ENCODE measurements at regions of chr14 and their contacts with region 1.

Region 1: DNA sequence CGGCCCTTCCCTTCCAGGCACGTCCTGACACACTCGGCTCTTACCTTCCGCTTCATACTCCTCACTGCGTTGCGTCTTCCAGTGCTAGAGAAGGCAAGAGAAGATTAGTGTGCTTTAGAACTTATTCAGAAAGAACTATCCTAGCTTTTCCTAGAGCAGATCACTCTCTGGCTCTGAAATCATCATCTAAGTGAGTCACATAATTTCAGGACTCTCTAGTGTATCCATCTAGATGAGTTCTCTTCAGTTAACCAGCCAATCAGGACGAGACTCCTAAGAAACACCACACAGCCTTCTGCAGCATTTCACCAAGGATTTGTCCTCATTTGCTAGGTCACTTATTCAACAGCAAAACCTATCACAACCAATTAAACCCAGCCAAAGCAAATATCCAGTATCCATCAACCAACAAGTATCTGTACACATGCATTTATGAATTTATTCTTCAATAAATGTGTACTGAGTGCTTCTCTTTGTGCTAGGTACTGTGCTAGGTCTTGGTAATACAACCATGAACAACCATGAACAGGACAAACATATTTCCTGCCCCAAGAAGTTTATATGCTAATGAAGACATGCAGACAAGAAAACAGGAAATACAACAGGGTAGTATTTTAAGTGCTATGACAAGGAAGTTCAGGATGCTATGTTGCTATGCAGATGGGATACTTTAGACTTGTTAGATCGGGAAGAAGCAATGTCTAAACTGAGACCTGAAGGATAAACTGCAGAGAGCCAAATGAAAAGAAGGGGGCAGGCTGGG is 52.1 kb downstream of the NIN start:
- DNase-seq: no peak
- ATAC-seq: no peak
- H3K4me3 ChIP-seq: no peak overlapping the region
- H3K4me3 Mint-ChIP-seq: peak overlapping the region in 4 of 10 donors; percentile 39 to 63 (median 50)
- H3K27ac ChIP-seq: no peak overlapping the region
- H3K27ac Mint-ChIP-seq: peak overlapping the region in 8 of 9 donors; percentile 61 to 97 (median 88)
- H3K4me1 ChIP-seq: peaks cover 31 to 32% of the 10 kb centered on the region in 2 donors
- H3K4me1 Mint-ChIP-seq: peaks cover 26 to 76% (median 66%) of the 10 kb centered on the region in 7 donors
- H3K27me3 ChIP-seq: no peaks in the 10 kb centered on the region
- H3K27me3 Mint-ChIP-seq: no peaks in the 10 kb centered on the region

Region 2: DNA sequence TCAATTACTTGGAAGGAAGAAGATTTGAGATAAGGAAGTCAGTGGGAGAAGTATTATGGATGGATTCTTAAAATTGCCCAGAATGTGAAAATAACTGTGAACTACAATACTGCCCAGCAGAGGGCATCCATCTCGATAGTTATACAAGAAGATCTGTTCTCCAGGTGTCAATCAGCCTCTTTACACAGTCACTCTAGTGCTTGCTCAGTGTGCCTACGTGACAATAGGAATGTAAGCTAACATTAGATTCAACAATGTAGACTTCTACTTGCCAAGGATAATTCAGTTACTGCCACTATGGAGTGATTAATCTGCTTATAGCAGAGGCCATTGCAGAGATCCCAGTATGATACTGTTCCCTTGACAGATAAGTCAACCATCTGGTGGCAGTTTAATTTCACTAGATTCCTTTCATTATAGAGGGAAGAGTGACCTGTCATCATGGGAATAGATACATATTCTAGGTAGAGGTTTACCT is 235.9 kb before region 1 on chr14:
- CTCF ChIA-PET with region 1: interaction called, 3 read pairs
- POLR2A ChIA-PET with region 1: no interaction called
- intact Hi-C with region 1: loop called (anchors 1 kb)
- DNase-seq: peak in 7 of 9 donors; percentile 5 to 51 (median 38)
- ATAC-seq: peak; percentile 84
- H3K4me3 ChIP-seq: no peak overlapping the region
- H3K4me3 Mint-ChIP-seq: no peak overlapping the region
- H3K27ac ChIP-seq: no peak overlapping the region
- H3K27ac Mint-ChIP-seq: no peak overlapping the region
- H3K4me1 ChIP-seq: no peaks in the 10 kb centered on the region
- H3K4me1 Mint-ChIP-seq: peaks cover 5 to 13% (median 12%) of the 10 kb centered on the region in 7 donors
- H3K27me3 ChIP-seq: no peaks in the 10 kb centered on the region
- H3K27me3 Mint-ChIP-seq: peaks cover 0 to 7% (median 0%) of the 10 kb centered on the region in 5 donors

Region 3: GRCh38 chr14:50599700-50600444 is 179.0 kb before region 1 on chr14:
- CTCF ChIA-PET with region 1: interaction called, 6 read pairs
- POLR2A ChIA-PET with region 1: no interaction called
- intact Hi-C with region 1: loop called (anchors 1 kb)
- DNase-seq: peak in 4 of 9 donors; percentile 7 to 21 (median 16)
- ATAC-seq: no peak
- H3K4me3 ChIP-seq: no peak overlapping the region
- H3K4me3 Mint-ChIP-seq: no peak overlapping the region
- H3K27ac ChIP-seq: no peak overlapping the region
- H3K27ac Mint-ChIP-seq: no peak overlapping the region
- H3K4me1 ChIP-seq: no peaks in the 10 kb centered on the region
- H3K4me1 Mint-ChIP-seq: peaks cover 0 to 4% (median 0%) of the 10 kb centered on the region in 7 donors
- H3K27me3 ChIP-seq: no peaks in the 10 kb centered on the region
- H3K27me3 Mint-ChIP-seq: peaks cover 0 to 3% (median 0%) of the 10 kb centered on the region in 5 donors

Region 4: GRCh38 chr14:50619556-50620141 is 159.3 kb before region 1 on chr14:
- CTCF ChIA-PET with region 1: no interaction called
- POLR2A ChIA-PET with region 1: no interaction called
- intact Hi-C with region 1: loop called in 1 of 2 experiments (anchors 1 kb)
- DNase-seq: peak in 3 of 9 donors; percentile 7 to 11 (median 7)
- ATAC-seq: peak; percentile 41
- H3K4me3 ChIP-seq: no peak overlapping the region
- H3K4me3 Mint-ChIP-seq: no peak overlapping the region
- H3K27ac ChIP-seq: no peak overlapping the region
- H3K27ac Mint-ChIP-seq: no peak overlapping the region
- H3K4me1 ChIP-seq: no peaks in the 10 kb centered on the region
- H3K4me1 Mint-ChIP-seq: no peaks in the 10 kb centered on the region
- H3K27me3 ChIP-seq: no peaks in the 10 kb centered on the region
- H3K27me3 Mint-ChIP-seq: no peaks in the 10 kb centered on the region

Region 5: GRCh38 chr14:50792051-50792477 is 13.2 kb after region 1 on chr14:
- CTCF ChIA-PET with region 1: interaction called, 28 read pairs
- POLR2A ChIA-PET with region 1: interaction called, 5 read pairs
- intact Hi-C with region 1: loop called in 1 of 2 experiments (anchors 2 kb)
- DNase-seq: peak in 7 of 9 donors; percentile 35 to 56 (median 41)
- ATAC-seq: peak; percentile 72
- H3K4me3 ChIP-seq: peak overlapping the region; percentile 56
- H3K4me3 Mint-ChIP-seq: peak overlapping the region; percentile 67 to 89 (median 82)
- H3K27ac ChIP-seq: peak overlapping the region; percentile 71
- H3K27ac Mint-ChIP-seq: peak overlapping the region; percentile 91 to 99 (median 96)
- H3K4me1 ChIP-seq: peaks cover 53 to 69% of the 10 kb centered on the region in 2 donors
- H3K4me1 Mint-ChIP-seq: peaks cover 42 to 100% (median 91%) of the 10 kb centered on the region in 7 donors
- H3K27me3 ChIP-seq: no peaks in the 10 kb centered on the region
- H3K27me3 Mint-ChIP-seq: no peaks in the 10 kb centered on the region

Region 6: DNA sequence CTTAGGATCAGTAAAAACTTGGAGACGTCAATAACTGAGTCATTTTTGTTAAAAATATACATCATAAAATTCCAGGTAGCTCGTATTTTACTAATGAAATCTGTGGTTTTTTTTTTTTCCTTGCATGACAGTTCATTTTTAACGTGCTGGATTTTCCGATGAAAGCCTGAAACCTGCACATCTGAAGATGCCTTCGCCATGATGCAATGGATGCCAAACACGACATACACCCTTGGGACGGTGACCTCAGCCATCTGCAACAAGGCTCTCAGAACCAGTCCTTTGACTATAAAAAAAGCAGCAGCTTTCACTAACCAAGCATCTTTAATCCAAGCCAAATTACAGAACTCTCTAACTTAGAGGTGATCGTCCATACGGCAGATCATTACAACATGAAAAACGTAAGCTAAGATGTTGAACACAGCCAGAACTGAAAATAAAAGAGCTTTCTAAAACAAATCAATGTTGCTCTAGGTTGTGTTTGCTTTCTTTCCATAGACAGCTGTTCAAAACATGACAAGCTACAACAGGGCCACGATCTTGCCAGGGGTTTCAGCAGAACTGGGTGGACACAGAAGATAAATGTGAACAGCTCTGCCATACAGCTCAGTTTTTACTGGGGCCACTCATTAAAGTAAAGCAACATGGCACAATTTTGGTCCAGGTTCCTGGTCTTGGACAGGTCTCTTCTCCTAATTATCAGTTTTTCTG is 44.3 kb after region 1 on chr14:
- CTCF ChIA-PET with region 1: interaction called, 15 read pairs
- POLR2A ChIA-PET with region 1: interaction called, 47 read pairs
- intact Hi-C with region 1: no loop called
- DNase-seq: peak in 4 of 9 donors; percentile 13 to 26 (median 20)
- ATAC-seq: peak; percentile 14
- H3K4me3 ChIP-seq: peak overlapping the region; percentile 48
- H3K4me3 Mint-ChIP-seq: peak overlapping the region; percentile 51 to 85 (median 80)
- H3K27ac ChIP-seq: peak overlapping the region; percentile 69
- H3K27ac Mint-ChIP-seq: peak overlapping the region; percentile 89 to 97 (median 92)
- H3K4me1 ChIP-seq: peaks cover 85 to 87% of the 10 kb centered on the region in 2 donors
- H3K4me1 Mint-ChIP-seq: peaks cover 74 to 97% (median 92%) of the 10 kb centered on the region in 7 donors
- H3K27me3 ChIP-seq: no peaks in the 10 kb centered on the region
- H3K27me3 Mint-ChIP-seq: no peaks in the 10 kb centered on the region

Measured in naive thymus-derived CD4-positive, alpha-beta T cell (primary cell).